ENCODE measurements at regions of chr6 and their contacts with region 1.

Region 1: GRCh38 chr6:2952557-2953095 is 18.7 kb downstream of the SERPINB6 start:
- DNase-seq: peak; percentile 48
- H3K4me3 Mint-ChIP-seq: no peak overlapping the region
- H3K27ac Mint-ChIP-seq: no peak overlapping the region
- H3K4me1 Mint-ChIP-seq: no peaks in the 10 kb centered on the region
- H3K27me3 Mint-ChIP-seq: peaks cover 13% of the 10 kb centered on the region

Region 2: DNA sequence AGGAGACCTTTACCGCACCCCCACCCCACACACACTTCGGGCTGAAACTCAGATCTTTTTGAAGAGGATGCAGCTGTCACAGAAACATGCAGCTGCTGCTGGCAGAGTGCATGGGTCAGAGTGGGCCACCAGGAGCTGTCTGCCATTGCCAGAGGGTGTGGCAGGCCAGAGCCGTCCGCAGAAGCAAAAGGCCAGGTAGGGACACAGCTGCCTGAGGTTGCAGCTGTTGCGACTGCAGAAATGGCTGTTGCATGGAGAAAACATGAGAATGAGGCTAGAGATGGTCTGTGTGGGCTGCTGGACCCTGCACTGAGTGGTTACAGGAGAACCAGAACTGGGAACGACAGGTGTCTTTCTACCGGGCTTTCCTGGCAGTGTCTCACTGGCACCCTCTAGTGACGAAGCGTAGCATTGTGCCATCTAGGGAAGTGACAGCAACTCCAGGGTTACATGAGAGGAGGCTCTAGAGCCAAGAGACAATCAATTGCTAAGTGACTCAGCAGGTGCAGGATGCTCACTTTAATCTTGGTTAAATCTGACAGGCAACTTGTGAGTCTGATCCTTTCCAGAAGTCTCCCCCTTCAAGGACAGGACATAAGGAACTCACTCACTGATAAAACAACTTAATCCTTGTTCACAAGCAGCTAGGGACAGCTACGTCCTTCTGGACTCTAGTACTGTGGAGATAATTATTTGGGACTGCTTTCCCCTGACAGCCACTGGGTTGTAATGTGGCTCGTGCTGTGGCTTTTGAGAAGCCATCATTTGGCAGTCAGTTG is 20.5 kb before region 1 on chr6:
- CTCF ChIA-PET with region 1: interaction called, 19 read pairs
- POLR2A ChIA-PET with region 1: no interaction called
- DNase-seq: peak; percentile 88
- H3K4me3 Mint-ChIP-seq: no peak overlapping the region
- H3K27ac Mint-ChIP-seq: no peak overlapping the region
- H3K4me1 Mint-ChIP-seq: peaks cover 23% of the 10 kb centered on the region
- H3K27me3 Mint-ChIP-seq: peaks cover 20% of the 10 kb centered on the region

Region 3: DNA sequence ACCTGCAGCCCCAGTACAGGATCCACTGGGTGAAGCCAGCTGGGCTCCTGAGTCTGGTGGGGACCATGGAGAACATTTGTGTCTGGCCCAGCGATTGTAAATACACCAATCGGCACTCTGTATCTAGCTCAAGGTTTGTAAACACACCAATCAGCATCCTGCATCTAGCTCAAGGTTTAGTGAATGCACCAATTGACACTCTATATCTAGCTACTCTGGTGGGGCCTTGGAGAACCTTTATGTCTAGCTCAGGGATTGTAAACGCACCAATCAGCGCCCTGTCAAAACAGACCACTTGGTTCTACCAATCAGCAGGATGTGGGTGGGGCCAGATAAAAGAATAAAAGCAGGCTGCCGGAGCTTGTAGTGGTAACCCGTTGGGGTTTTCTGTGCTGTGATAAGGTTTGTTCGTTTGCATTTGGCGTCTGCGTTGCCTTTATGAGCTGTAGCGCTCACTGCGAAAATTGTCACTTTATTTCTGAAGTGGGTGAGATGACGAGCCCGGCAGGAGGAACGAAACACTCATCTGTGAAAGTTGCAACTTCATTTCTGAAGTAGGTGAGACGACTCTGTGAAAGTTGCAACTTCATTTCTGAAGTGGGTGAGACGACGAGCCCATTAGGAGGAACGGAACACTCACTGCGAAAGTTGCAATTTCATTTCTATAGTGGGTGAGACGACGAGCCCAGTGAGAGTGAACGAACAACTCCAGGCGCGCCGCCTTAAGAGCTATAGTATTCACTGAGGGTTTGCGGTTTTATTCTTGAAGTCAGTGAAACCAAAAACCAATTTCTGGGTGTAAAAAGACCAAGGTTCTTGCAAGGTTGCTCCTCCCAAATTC is 12.4 kb before region 1 on chr6:
- CTCF ChIA-PET with region 1: interaction called, 35 read pairs
- POLR2A ChIA-PET with region 1: interaction called, 4 read pairs
- DNase-seq: peak; percentile 81
- H3K4me3 Mint-ChIP-seq: peak overlapping the region; percentile 69
- H3K27ac Mint-ChIP-seq: peak overlapping the region; percentile 94
- H3K4me1 Mint-ChIP-seq: peaks cover 57% of the 10 kb centered on the region
- H3K27me3 Mint-ChIP-seq: peaks cover 31% of the 10 kb centered on the region

Measured in activated CD4-positive, alpha-beta memory T cell treated with anti-CD3 and anti-CD28 coated beads, Interleukin-2, amount 10 ng/mL, durations not matched to agents 7 days and 5 days (primary cell).